ENCODE measurements at regions of chr13 and their contacts with region 1.

Region 1: DNA sequence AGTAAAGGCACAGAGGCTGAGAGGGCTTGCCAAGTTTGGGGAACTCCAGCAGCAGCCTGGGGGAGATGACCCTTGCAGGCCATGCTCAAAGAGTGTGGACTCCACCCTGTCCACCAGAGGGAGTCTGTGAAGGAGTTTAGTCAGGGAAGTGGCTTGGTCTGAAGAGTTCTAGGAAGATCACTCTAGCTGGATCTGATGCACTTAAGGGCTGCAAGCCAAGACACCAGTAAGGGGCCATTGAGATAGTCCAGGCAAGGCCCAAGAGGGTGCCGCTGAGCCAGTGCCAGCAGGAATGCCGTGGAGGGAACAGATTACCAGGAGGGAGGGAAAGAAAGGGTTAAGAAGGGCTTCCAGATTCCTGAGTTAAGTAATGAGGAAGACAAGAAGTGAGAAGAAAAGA is 68.7 kb downstream of the ZAR1L start:
- DNase-seq: peak in 4 of 5 donors; percentile 53 to 73 (median 58)
- ATAC-seq: peak; percentile 51 to 93 (median 90)
- H3K4me3 ChIP-seq: peak overlapping the region in 1 of 12 donors; percentile 16
- H3K27ac ChIP-seq: peak overlapping the region in 6 of 12 donors; percentile 6 to 43 (median 36)
- H3K4me1 ChIP-seq: peaks cover 0 to 20% (median 13%) of the 10 kb centered on the region in 12 donors
- H3K27me3 ChIP-seq: no peaks in the 10 kb centered on the region
- CTCF ChIP-seq: peak; percentile 65 to 82 (median 72)
- POLR2A ChIP-seq: no peak

Region 2: DNA sequence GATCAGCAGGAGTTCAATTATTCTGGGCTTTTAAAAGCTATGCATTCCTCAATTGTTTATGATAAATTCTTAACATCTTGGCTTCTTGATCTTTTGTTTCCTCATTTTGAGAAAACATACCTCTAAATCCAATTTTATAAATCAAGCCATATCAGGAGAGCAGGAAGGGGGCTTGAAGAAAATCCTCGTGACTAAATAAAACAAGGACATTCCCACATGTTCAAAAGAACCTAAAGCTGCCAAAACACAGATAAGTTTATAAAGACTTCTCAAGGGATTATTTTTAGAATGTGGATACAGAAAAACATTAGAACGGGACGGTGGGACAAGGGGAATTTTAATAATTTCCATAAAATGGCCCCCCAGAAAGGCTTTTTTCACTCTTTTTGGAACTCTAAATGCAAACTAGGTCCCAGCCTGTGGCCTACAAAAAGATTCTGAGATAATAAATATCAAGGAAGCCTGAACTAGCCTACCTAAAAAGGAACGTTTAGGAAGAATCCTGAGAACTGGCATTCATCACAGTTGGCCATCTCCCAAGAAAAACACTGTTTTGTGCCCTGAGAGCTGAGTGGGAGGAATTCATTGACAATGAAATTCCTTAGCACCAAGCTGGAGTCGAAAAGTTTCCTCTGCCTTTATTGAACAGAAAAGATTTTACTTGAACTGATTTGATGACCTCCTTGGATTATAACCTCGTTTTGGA is 38.6 kb after region 1 on chr13:
- intact Hi-C with region 1: loop called in 3 of 10 experiments (anchors 1 to 5 kb)
- DNase-seq: peak in 3 of 5 donors; percentile 39 to 70 (median 61)
- ATAC-seq: peak; percentile 33 to 68 (median 57)
- H3K4me3 ChIP-seq: peak overlapping the region in 1 of 12 donors; percentile 17
- H3K27ac ChIP-seq: peak overlapping the region; percentile 39 to 84 (median 74)
- H3K4me1 ChIP-seq: peaks cover 6 to 43% (median 20%) of the 10 kb centered on the region in 12 donors
- H3K27me3 ChIP-seq: no peaks in the 10 kb centered on the region
- CTCF ChIP-seq: no peak
- POLR2A ChIP-seq: no peak

Region 3: GRCh38 chr13:32824671-32825070 is 578.2 kb after region 1 on chr13:
- intact Hi-C with region 1: no loop called
- DNase-seq: no peak
- ATAC-seq: peak in 1 of 4 donors; percentile 14
- H3K4me3 ChIP-seq: no peak overlapping the region
- H3K27ac ChIP-seq: no peak overlapping the region
- H3K4me1 ChIP-seq: no peaks in the 10 kb centered on the region
- H3K27me3 ChIP-seq: no peaks in the 10 kb centered on the region
- CTCF ChIP-seq: no peak
- POLR2A ChIP-seq: no peak

Measured in heart left ventricle (tissue), 16 donors.